ENCODE measurements at regions of chr7 and their contacts with region 1.

Region 1: GRCh38 chr7:140517546-140518369 is 38.5 kb upstream of the MKRN1 start:
- DNase-seq: peak; percentile 94
- ATAC-seq: peak; percentile 94

Region 2: GRCh38 chr7:140358412-140359051 is 159.2 kb before region 1 on chr7:
- intact Hi-C with region 1: no loop called
- DNase-seq: no peak
- ATAC-seq: no peak

Region 3: GRCh38 chr7:140653319-140654108 is 135.8 kb after region 1 on chr7:
- intact Hi-C with region 1: loop called (anchors 5 kb)
- DNase-seq: no peak
- ATAC-seq: peak; percentile 68

Region 4: GRCh38 chr7:141014524-141015395 is 497.0 kb after region 1 on chr7 and contains the start of gene MRPS33:
- intact Hi-C with region 1: no loop called
- DNase-seq: peak; percentile 95
- ATAC-seq: peak; percentile 100
- total RNA-seq, gene MRPS33: 125 TPM

Measured in left ventricle myocardium superior (tissue), 1 donor.